ENCODE measurements at regions of chr17 and their contacts with region 1.

Region 1: DNA sequence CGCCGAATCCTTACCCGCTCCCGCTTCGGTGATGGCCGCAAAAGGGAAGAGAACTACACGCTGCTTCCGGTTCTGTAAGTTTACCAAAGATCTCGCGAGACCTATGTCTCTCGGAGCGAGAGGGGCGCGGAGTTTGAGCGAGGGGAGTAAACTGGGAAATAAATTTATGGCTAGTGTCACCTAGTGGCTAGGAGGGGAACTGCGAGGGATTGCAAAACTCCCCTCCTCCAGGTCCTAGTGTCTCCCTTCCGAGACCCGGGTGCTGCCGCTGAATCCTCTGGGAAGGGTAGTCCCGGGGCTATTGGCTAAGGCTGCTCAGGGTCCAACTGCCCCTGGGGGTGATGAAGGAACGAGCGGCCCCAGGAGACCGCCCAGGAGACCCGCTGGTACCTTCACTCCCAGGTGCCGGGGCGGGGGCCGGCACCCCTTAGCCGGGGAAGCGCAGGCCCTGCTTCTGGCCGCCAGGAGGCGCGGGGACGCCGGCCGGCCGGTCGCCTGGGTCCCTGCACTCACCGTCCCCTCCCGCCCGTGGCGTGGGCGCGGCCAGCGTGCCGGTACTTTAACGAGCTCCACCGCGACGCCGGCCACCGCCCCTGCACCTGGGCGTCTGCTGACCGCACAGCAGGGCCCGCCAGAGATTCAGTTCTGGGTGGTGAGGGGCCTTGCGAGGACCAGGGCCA is at the start of gene RPL26:
- DNase-seq: peak; percentile 96 to 97
- H3K4me3 ChIP-seq: peak within 1 kb of the TSS; percentile 91 to 100 (median 98)
- H3K27ac ChIP-seq: peak within 1 kb of the TSS; percentile 76
- H3K4me1 ChIP-seq: peaks cover 0 to 12% (median 4%) of the 10 kb centered on the region in 4 experiments; a peak in 5 of 7 replicates
- H3K27me3 ChIP-seq: no peaks in the 10 kb centered on the region
- CTCF ChIP-seq: peak; percentile 75 to 84 (median 83)
- EP300 ChIP-seq: no peak
- POLR2A ChIP-seq: peak; percentile 99
- RAD21 ChIP-seq: peak; percentile 16 to 35; a peak in 3 of 4 replicates
- total RNA-seq, gene RPL26: 1,963 and 1,980 TPM in 2 replicates

Region 2: GRCh38 chr17:8109661-8110464 is 273.4 kb before region 1 on chr17:
- CTCF ChIA-PET with region 1: no interaction called
- POLR2A ChIA-PET with region 1: no interaction called
- DNase-seq: peak in 1 of 2 experiments; percentile 92
- H3K4me3 ChIP-seq: peak overlapping the region; percentile 39 to 69 (median 67)
- H3K27ac ChIP-seq: no peak overlapping the region
- H3K4me1 ChIP-seq: peaks cover 0 to 13% (median 3%) of the 10 kb centered on the region in 4 experiments; a peak in 5 of 7 replicates
- H3K27me3 ChIP-seq: peaks cover 3 to 47% (median 35%) of the 10 kb centered on the region in 4 experiments
- CTCF ChIP-seq: peak; percentile 84 to 94 (median 90)
- EP300 ChIP-seq: no peak
- POLR2A ChIP-seq: no peak
- RAD21 ChIP-seq: peak; percentile 72 to 84

Region 3: GRCh38 chr17:8294814-8295316 is 88.4 kb before region 1 on chr17:
- CTCF ChIA-PET with region 1: interaction called, 3 read pairs
- POLR2A ChIA-PET with region 1: interaction called, 10 read pairs
- DNase-seq: no peak
- H3K4me3 ChIP-seq: peak overlapping the region; percentile 64 to 82 (median 76); a peak in 7 of 8 replicates
- H3K27ac ChIP-seq: no peak overlapping the region
- H3K4me1 ChIP-seq: peaks cover 0 to 8% (median 5%) of the 10 kb centered on the region in 4 experiments; a peak in 5 of 7 replicates
- H3K27me3 ChIP-seq: peaks cover 0 to 2% (median 0%) of the 10 kb centered on the region in 4 experiments; a peak in 1 of 7 replicates
- CTCF ChIP-seq: no peak
- EP300 ChIP-seq: no peak
- POLR2A ChIP-seq: no peak
- RAD21 ChIP-seq: no peak

Region 4: DNA sequence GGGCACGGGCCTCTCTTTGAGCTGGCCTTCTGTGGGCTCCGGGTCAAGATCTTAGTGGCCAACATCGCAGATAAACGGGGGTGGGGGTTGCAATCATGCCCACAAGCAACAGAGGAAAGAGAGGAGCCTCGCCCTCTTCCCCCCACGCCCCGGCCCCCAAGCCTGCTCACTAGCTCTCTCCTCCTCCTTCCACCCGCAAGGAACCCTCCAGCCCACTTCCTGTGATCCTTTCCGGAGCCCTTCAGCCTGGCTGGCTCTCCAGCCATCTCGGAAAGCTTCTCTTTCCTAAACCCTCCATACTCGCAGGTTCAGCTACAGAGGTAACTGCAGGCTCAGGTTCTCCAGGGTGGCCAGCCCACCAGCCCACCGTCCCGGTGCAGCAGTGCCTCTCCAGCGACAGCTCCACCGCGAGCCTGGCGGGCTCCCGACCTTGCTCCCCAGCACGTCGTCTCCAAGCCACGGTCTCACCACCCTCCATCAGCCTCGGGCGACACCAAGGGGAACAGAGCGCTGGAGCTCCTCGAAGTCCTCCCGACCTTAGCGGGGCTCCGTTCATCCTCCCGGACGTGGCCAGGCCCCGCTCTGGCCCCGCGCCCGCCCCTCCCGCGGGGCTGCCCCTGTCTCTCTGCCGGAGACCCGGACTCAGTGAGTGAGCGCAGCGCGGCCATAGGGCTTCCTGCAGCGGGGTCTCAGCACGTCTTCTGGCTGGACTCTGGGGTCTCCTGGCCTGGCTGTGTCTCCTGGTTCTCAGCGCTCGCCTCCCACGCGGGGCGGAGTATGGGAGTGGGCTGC is 56.6 kb before region 1 on chr17:
- CTCF ChIA-PET with region 1: interaction called, 3 read pairs
- POLR2A ChIA-PET with region 1: interaction called, 33 read pairs
- DNase-seq: peak in 1 of 2 experiments; percentile 74
- H3K4me3 ChIP-seq: peak overlapping the region; percentile 56 to 73 (median 62)
- H3K27ac ChIP-seq: no peak overlapping the region
- H3K4me1 ChIP-seq: peaks cover 0 to 11% (median 5%) of the 10 kb centered on the region in 4 experiments; a peak in 5 of 7 replicates
- H3K27me3 ChIP-seq: peaks cover 2 to 20% (median 17%) of the 10 kb centered on the region in 4 experiments; a peak in 6 of 7 replicates
- CTCF ChIP-seq: no peak
- EP300 ChIP-seq: no peak
- POLR2A ChIP-seq: 0 out of 3 replicates have a peak, but pooled peaks of 1 of the 2 experiments have one; percentile 33
- RAD21 ChIP-seq: no peak

Region 5: DNA sequence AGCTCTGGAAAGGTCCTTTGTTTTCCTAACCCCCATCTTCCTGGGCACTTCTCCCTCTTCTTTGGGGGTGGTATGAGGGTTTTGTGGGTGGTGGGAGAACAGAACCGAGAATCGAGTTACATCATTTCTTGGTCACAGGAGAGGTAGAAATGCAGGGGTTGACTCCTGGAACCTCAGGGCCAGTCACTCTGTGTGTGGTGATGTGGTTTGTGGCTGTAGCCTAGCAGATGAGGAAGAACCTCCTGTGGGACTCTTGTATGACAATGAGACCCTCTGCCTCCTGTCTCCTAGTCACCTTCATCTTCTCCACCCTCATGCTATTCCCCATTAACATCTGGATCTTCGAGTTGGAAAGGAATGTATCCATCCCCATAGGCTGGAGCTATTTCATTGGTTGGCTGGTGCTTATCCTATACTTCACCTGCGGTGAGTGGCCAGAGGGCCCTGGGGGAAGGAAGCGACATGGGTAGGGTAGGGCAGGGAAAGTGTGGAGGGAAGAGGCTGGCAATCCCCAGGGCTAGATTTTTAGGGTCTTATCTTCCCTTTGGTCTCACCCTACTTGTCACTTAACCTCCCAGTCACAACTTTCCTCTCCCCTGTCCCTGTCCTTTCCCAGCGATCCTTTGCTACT is 38.1 kb before region 1 on chr17:
- CTCF ChIA-PET with region 1: interaction called, 3 read pairs
- POLR2A ChIA-PET with region 1: interaction called, 66 read pairs
- DNase-seq: no peak
- H3K4me3 ChIP-seq: no peak overlapping the region
- H3K27ac ChIP-seq: no peak overlapping the region
- H3K4me1 ChIP-seq: peaks cover 0 to 4% (median 3%) of the 10 kb centered on the region in 4 experiments; a peak in 4 of 7 replicates
- H3K27me3 ChIP-seq: no peaks in the 10 kb centered on the region
- CTCF ChIP-seq: no peak
- EP300 ChIP-seq: no peak
- POLR2A ChIP-seq: no peak
- RAD21 ChIP-seq: no peak

Region 6: GRCh38 chr17:8366231-8366630 is 17.1 kb before region 1 on chr17:
- CTCF ChIA-PET with region 1: interaction called, 7 read pairs
- POLR2A ChIA-PET with region 1: interaction called, 36 read pairs
- DNase-seq: no peak
- H3K4me3 ChIP-seq: no peak overlapping the region
- H3K27ac ChIP-seq: no peak overlapping the region
- H3K4me1 ChIP-seq: no peaks in the 10 kb centered on the region
- H3K27me3 ChIP-seq: no peaks in the 10 kb centered on the region
- CTCF ChIP-seq: no peak
- EP300 ChIP-seq: no peak
- POLR2A ChIP-seq: no peak
- RAD21 ChIP-seq: no peak

Region 7: GRCh38 chr17:8409966-8410864 is 26.9 kb after region 1 on chr17:
- CTCF ChIA-PET with region 1: interaction called, 4 read pairs
- POLR2A ChIA-PET with region 1: interaction called, 21 read pairs
- DNase-seq: peak; percentile 82 to 95
- H3K4me3 ChIP-seq: no peak overlapping the region
- H3K27ac ChIP-seq: no peak overlapping the region
- H3K4me1 ChIP-seq: peaks cover 0 to 10% (median 4%) of the 10 kb centered on the region in 4 experiments; a peak in 6 of 7 replicates
- H3K27me3 ChIP-seq: no peaks in the 10 kb centered on the region
- CTCF ChIP-seq: peak; percentile 78 to 99 (median 82)
- EP300 ChIP-seq: no peak
- POLR2A ChIP-seq: no peak
- RAD21 ChIP-seq: peak; percentile 79 to 80